ENCODE measurements at regions of chr17 and their contacts with region 1.

Region 1: DNA sequence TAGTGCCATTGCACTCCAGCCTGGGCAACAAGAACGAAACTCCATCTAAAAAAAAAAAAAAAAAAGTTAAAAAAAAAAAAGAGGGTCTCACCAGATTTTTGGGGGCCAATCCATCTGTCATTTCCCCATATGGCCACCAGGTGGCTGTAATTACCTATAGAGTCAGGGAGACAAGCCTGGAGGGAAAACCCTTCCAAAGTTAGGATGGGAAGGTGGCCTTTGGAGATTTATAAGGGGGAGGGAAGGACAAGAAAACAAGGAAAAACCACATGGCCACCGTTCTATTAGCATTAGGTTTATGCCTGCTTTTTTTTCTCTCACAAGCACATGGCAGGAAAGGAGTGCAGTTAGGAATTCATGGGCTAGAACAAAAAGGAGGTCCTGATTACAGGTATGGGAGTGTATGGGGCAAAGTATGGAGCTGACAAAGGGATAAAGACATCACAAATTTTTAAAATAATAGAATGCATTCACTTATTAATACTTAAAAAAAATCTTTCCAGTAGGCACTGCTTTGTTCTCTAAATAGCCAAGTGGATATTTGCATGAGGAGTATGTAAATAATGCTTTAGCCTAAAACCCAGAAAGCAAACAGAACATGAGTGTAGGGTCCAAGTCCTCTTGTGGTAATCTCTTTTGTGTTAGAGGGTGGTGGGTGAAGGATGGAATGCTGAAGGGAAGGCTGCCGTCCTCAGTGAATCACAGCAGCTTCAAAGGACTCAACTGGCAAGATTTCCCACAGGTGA is 5.1 kb downstream of the CYB5D1 start:
- DNase-seq: peak in 1 of 2 experiments; percentile 49
- H3K4me3 ChIP-seq: no peak overlapping the region
- H3K27ac ChIP-seq: no peak overlapping the region
- H3K4me1 ChIP-seq: peaks cover 7% of the 10 kb centered on the region; the same call in 1 of the 2 replicates
- H3K27me3 ChIP-seq: no peaks in the 10 kb centered on the region
- CTCF ChIP-seq: peak; percentile 87

Region 2: DNA sequence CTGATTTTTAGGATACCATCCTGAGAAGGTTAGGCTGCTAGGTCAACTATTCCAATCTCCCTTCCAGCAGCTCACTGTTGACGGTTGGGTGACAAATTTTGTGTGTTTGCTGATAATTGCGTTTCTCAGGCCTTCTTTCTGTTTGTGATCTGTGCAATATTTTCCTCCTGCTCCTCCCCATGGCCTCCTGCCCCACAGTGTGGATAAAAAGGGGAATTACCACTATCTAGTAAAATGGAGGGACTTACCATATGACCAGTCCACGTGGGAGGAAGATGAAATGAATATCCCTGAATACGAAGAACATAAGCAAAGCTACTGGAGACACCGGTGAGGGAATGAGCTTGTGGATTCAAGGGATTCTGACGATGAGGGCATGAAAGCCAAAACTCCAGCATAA is 34.9 kb after region 1 on chr17:
- CTCF ChIA-PET with region 1: interaction called, 3 read pairs
- POLR2A ChIA-PET with region 1: no interaction called
- intact Hi-C with region 1: loop called (anchors 2 kb)
- DNase-seq: no peak
- H3K4me3 ChIP-seq: no peak overlapping the region
- H3K27ac ChIP-seq: no peak overlapping the region
- H3K4me1 ChIP-seq: no peaks in the 10 kb centered on the region
- H3K27me3 ChIP-seq: no peaks in the 10 kb centered on the region
- CTCF ChIP-seq: peak; percentile 57

Region 3: DNA sequence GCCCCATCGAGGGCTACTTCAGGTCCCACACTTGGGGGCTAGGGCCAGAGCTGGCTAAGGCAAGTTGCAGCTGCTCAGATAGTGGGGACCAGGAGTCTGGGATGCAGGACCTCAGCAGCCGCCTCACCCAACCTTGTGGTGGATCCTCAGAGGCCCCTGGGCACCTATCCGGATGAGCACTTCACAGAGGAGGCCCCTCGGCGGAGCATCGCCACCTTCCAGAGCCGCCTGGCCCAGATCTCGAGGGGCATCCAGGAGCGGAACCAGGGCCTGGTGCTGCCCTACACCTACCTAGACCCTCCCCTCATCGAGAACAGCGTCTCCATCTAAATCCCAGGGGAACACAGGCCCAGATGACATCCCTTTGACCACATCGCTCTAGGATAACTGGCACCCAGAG is 185.4 kb after region 1 on chr17:
- CTCF ChIA-PET with region 1: no interaction called
- POLR2A ChIA-PET with region 1: no interaction called
- intact Hi-C with region 1: no loop called
- DNase-seq: no peak
- H3K4me3 ChIP-seq: no peak overlapping the region
- H3K27ac ChIP-seq: no peak overlapping the region
- H3K4me1 ChIP-seq: no peaks in the 10 kb centered on the region
- H3K27me3 ChIP-seq: no peaks in the 10 kb centered on the region
- CTCF ChIP-seq: no peak